H1 (cell line): ENCODE measurements at regions of chr7 and their contacts with region 1.

Region 1: GRCh38 chr7:131859147-131859821 is 302.9 kb upstream of the PODXL start:
- DNase-seq: peak; percentile 38 to 88
- H3K4me3 ChIP-seq: no peak overlapping the region
- H3K27ac ChIP-seq: no peak overlapping the region
- H3K4me1 ChIP-seq: no peaks in the 10 kb centered on the region
- H3K27me3 ChIP-seq: no peaks in the 10 kb centered on the region
- CTCF ChIP-seq: peak; percentile 86 to 98 (median 91)
- EP300 ChIP-seq: no peak
- POLR2A ChIP-seq: no peak
- RAD21 ChIP-seq: peak; percentile 90 to 92

Region 2: GRCh38 chr7:131688738-131689661 is 170.3 kb before region 1 on chr7:
- CTCF ChIA-PET with region 1: interaction called, 52 read pairs
- POLR2A ChIA-PET with region 1: no interaction called
- DNase-seq: peak; percentile 75 to 95
- H3K4me3 ChIP-seq: no peak overlapping the region
- H3K27ac ChIP-seq: no peak overlapping the region
- H3K4me1 ChIP-seq: peaks cover 0 to 9% (median 2%) of the 10 kb centered on the region in 4 experiments; a peak in 5 of 7 replicates
- H3K27me3 ChIP-seq: peaks cover 0 to 7% (median 3%) of the 10 kb centered on the region in 4 experiments; a peak in 1 of 7 replicates
- CTCF ChIP-seq: peak; percentile 96 to 99 (median 99)
- EP300 ChIP-seq: no peak
- POLR2A ChIP-seq: no peak
- RAD21 ChIP-seq: peak; percentile 99 to 100

Region 3: DNA sequence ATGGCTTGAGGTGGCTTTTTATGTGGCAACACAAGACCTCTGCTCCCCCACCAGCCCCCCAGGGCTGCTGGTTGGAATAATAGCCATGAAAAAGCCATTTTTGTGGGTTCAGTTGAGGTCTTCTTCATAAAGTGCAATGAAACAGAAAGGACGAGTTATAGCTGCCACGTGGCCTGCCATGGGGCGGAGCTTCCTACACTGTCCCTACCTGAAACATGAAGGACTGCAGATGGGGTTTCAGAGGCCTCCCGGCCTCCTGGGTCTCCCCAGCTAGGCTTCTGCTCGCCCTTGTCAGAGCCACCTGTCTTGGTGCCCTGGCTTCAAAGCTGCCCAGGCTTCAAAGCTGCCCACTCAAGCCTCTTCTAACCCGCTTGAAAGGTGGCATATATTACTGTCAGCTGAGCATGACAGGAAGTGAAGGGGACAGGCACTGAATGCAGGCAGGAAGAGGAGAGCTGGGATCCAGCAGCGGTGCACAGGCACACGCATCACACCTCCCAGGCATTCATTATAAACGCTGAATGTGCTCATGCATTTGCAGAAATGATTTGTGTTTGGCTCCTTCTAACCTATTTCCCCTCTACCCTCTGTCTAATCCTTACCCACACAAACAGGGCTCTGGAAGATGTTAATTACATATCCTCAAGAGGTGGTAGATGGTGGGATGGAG is 57.0 kb before region 1 on chr7:
- CTCF ChIA-PET with region 1: interaction called, 10 read pairs
- POLR2A ChIA-PET with region 1: no interaction called
- DNase-seq: no peak
- H3K4me3 ChIP-seq: no peak overlapping the region
- H3K27ac ChIP-seq: no peak overlapping the region
- H3K4me1 ChIP-seq: peaks cover 0 to 8% (median 5%) of the 10 kb centered on the region in 4 experiments; a peak in 4 of 7 replicates
- H3K27me3 ChIP-seq: no peaks in the 10 kb centered on the region; a peak in 1 of 7 replicates
- CTCF ChIP-seq: no peak
- EP300 ChIP-seq: no peak
- POLR2A ChIP-seq: no peak
- RAD21 ChIP-seq: no peak

Region 4: GRCh38 chr7:131836733-131837132 is 22.6 kb before region 1 on chr7:
- CTCF ChIA-PET with region 1: interaction called, 53 read pairs
- POLR2A ChIA-PET with region 1: no interaction called
- DNase-seq: peak in 1 of 2 experiments; percentile 29
- H3K4me3 ChIP-seq: no peak overlapping the region
- H3K27ac ChIP-seq: no peak overlapping the region
- H3K4me1 ChIP-seq: no peaks in the 10 kb centered on the region
- H3K27me3 ChIP-seq: no peaks in the 10 kb centered on the region
- CTCF ChIP-seq: peak; percentile 67 to 84 (median 75)
- EP300 ChIP-seq: no peak
- POLR2A ChIP-seq: no peak
- RAD21 ChIP-seq: peak; percentile 49 to 65; a peak in 3 of 4 replicates

Region 5: GRCh38 chr7:131879424-131879823 is 20.1 kb after region 1 on chr7:
- CTCF ChIA-PET with region 1: interaction called, 20 read pairs
- POLR2A ChIA-PET with region 1: no interaction called
- DNase-seq: no peak
- H3K4me3 ChIP-seq: no peak overlapping the region
- H3K27ac ChIP-seq: no peak overlapping the region
- H3K4me1 ChIP-seq: no peaks in the 10 kb centered on the region; a peak in 1 of 7 replicates
- H3K27me3 ChIP-seq: no peaks in the 10 kb centered on the region; a peak in 1 of 7 replicates
- CTCF ChIP-seq: no peak
- EP300 ChIP-seq: no peak
- POLR2A ChIP-seq: no peak
- RAD21 ChIP-seq: no peak

Region 6: GRCh38 chr7:131931370-131931769 is 72.1 kb after region 1 on chr7:
- CTCF ChIA-PET with region 1: interaction called, 10 read pairs
- POLR2A ChIA-PET with region 1: no interaction called
- DNase-seq: no peak
- H3K4me3 ChIP-seq: no peak overlapping the region
- H3K27ac ChIP-seq: no peak overlapping the region
- H3K4me1 ChIP-seq: no peaks in the 10 kb centered on the region
- H3K27me3 ChIP-seq: no peaks in the 10 kb centered on the region
- CTCF ChIP-seq: no peak
- EP300 ChIP-seq: no peak
- POLR2A ChIP-seq: no peak
- RAD21 ChIP-seq: no peak